Motor neuron (in vitro differentiated cells): ENCODE measurements at regions of chr10 and their contacts with region 1.

Region 1: DNA sequence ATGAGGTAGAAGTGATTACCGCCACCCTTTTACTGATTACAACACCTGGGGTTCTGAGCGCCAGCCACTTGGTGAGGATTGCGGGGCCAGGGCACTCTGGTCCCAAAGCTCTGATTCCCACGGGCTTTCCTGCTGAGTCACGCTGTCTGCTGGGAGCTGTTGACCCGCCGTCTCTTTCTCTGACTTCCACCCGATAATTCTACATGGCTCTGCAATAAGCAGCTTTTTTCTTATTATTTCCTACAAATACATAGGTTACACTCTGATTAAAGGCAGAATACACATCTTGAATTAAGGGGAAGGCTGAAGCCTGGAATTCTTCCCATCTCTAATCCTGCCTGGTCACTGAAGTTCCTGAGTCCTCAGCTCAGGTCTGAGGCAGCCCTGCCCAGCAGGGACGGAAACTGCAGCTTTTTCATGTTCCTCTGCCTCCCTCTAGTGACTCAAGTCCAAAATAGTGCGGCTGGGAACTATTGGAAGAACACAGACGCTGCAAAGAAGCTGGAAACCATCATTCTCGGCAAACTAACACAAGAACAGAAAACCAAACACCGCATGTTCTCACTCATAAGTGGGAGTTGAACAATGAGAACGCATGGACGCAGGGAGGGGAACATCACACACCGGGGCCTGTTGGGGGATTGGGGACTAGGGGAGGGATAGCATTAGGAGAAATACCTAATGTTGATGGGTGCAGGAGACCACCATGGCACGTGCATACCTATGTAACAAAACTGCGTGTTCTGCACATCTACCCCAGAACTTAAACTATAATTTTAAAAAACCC is 178.3 kb downstream of the PRKCQ start:
- ATAC-seq: peak; percentile 78 to 99 (median 95)
- H3K4me3 ChIP-seq: peak overlapping the region in 3 of 5 donors; percentile 13 to 36 (median 26)
- H3K27ac ChIP-seq: peak overlapping the region in 1 of 2 donors; percentile 35
- H3K4me1 ChIP-seq: peaks cover 8 to 12% of the 10 kb centered on the region in 2 donors

Region 2: DNA sequence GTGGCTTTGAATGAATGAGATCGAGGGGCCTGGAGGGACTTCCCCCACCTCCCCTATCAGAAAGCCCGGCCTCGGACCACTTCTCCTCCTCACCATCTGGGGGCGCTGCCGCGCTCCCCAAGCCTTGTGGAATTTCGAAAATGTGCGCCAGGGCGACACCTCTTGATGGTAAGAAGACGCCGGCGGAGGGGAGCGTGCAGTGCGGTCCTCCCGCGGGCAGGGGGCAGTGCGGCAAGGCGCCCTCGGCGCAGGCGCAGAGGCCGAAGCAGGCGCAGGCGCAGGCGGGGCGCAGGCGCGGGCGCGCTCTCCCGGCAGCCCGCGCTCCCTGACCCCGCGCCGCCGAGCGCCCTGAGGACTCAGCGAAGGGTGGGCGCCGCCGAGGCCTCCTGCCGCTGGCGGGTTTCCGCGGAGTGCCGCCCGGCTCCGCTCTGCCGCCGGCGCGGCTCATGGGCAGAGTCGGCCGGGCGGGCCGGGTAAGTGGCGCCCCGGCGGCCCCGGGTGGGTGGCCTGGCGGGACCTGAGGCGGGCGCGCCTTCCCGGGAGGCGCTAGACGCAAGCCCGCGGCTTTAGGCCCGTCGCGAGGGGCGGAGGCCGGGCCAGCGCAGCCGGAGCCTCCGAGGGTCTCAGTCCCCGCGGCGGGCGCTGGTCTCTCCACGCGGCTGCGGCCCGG is 312.9 kb before region 1 on chr10 and contains the start of gene RBM17:
- in situ Hi-C with region 1: loop called in 1 of 9 experiments (anchors 25 kb)
- ATAC-seq: peak; percentile 78 to 95 (median 90)
- H3K4me3 ChIP-seq: peak within 1 kb of the TSS; percentile 79 to 94 (median 92)
- H3K27ac ChIP-seq: peak within 1 kb of the TSS; percentile 76 to 87
- H3K4me1 ChIP-seq: peaks cover 7% of the 10 kb centered on the region in 2 donors
- total RNA-seq, gene RBM17: 29.2 to 128 (median 50.7) TPM

Region 3: DNA sequence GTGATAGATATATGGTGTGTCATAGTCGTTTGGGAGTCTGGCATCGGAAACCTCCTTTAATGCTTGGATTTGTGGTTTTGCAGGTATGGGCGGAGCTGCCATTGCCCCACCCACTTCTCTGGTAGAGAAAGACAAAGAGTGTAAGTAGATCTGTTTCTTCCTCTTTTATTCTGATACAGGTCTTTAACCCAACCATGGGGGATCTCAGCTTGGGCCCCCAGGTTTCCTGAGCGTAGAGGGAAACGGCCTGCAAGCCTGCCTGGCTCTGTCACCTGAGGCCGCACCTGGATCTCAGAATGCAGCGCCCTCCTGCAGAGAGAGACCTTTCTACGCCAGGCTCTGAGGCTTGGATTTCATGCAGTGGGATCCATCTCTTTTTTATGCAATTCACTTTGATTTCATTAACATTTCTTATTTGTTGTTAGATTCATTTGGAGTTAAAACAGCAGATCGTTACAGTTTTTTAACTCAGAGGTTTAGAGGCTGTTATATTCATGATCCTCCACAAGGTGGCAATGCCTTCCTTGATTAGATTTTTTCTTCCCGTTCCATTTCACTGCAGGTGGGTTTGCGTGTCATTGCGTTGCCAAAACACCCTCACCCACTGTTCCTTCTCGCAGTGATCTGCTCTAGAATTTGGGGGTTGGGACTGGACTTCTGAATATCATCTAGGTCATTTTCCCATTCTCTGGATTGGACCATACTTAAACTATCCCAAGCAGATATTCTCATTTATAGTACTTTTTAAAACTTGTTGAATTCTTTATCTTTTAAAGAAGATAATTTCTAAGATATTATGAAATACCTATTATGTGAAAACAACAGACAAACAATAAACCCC is 292.9 kb before region 1 on chr10:
- in situ Hi-C with region 1: loop called in 4 of 9 experiments (anchors 25 kb)
- ATAC-seq: peak in 3 of 8 experiments; percentile 21 to 39 (median 29)
- H3K4me3 ChIP-seq: no peak overlapping the region
- H3K27ac ChIP-seq: no peak overlapping the region
- H3K4me1 ChIP-seq: no peaks in the 10 kb centered on the region

Region 4: GRCh38 chr10:6202684-6203330 is 198.9 kb before region 1 on chr10 and contains the start of gene PFKFB3:
- in situ Hi-C with region 1: loop called in 2 of 9 experiments (anchors 10 to 25 kb)
- ATAC-seq: peak; percentile 72 to 83 (median 79)
- H3K4me3 ChIP-seq: peak within 1 kb of the TSS; percentile 54 to 81 (median 59)
- H3K27ac ChIP-seq: peak within 1 kb of the TSS; percentile 77 to 89
- H3K4me1 ChIP-seq: peaks cover 12 to 25% of the 10 kb centered on the region in 2 donors
- total RNA-seq, gene PFKFB3: 32.4 to 80.6 (median 46.6) TPM

Region 5: GRCh38 chr10:6667679-6668270 is 266.0 kb after region 1 on chr10:
- in situ Hi-C with region 1: loop called in 2 of 9 experiments (anchors 25 kb)
- ATAC-seq: peak; percentile 42 to 78 (median 58)
- H3K4me3 ChIP-seq: no peak overlapping the region
- H3K27ac ChIP-seq: no peak overlapping the region
- H3K4me1 ChIP-seq: peaks cover 2 to 6% of the 10 kb centered on the region in 2 donors